Endothelial cell of umbilical vein (primary cell): ENCODE measurements at regions of chr19 and their contacts with region 1.

Region 1: DNA sequence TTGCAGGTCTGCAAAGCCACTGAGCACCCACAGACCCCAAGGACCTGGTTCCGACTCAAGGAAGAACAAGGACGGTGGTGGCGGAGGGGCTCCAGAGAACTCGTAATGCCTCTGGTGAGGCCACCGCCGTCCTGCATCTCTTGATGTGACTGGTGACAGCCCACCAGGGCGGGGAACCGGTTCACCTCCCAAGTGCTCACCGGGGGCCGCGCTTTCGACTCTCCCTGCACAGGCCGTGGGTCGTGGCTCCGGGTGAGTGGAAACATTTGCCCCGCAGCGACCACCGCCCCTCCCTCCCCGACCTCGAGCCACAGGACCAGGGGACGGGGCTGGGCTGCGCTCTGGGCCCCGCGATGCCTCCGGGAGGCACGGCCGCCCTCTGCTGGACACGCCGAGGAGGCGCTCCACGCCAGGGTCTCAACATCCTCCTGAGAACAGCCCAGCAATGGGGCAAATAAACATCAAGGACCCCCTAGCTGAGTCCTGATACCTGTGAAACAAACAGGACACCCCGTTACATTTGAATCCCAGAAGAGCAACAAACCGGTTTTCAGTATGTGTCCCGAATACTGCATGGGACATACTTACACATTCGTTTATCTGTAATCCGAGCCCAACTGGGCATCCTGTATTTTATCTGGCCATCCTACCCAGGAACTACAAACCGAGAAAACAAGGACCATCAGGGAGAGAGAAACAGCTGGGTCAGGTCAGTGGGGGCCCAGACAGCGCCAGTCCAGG is 3.9 kb upstream of the PLPP2 start:
- DNase-seq: no peak
- H3K4me3 ChIP-seq: no peak overlapping the region
- H3K27ac ChIP-seq: no peak overlapping the region
- H3K4me1 ChIP-seq: peaks cover 11% of the 10 kb centered on the region
- H3K27me3 ChIP-seq: peaks cover 16 to 28% of the 10 kb centered on the region in 2 experiments
- CTCF ChIP-seq: peak; percentile 77 to 97
- POLR2A ChIP-seq: no peak

Region 2: DNA sequence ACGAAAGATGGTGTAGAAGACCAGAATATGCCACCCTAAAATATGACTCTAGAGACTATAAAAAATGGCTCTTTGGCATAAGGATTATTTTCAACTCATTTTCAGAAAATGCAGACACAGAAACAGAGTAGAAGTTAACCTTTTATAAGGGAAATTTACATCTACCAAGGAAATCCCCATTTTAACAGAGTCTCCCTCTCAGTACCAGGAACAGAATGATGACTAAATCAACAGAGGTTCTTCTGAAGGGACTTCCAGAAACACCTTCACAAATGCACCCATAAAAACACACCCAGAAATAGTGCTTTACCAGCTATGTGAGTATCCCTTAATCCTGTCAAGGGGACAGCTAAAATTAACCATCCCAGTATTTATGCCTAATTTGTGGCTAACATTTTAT is 33.0 kb before region 1 on chr19:
- CTCF ChIA-PET with region 1: no interaction called
- POLR2A ChIA-PET with region 1: no interaction called
- dilution Hi-C with region 1: no loop called
- intact Hi-C with region 1: loop called (anchors 1 kb)
- DNase-seq: no peak
- H3K4me3 ChIP-seq: no peak overlapping the region
- H3K27ac ChIP-seq: no peak overlapping the region
- H3K4me1 ChIP-seq: no peaks in the 10 kb centered on the region
- H3K27me3 ChIP-seq: peaks cover 10 to 25% of the 10 kb centered on the region in 2 experiments
- CTCF ChIP-seq: no peak
- POLR2A ChIP-seq: no peak

Region 3: DNA sequence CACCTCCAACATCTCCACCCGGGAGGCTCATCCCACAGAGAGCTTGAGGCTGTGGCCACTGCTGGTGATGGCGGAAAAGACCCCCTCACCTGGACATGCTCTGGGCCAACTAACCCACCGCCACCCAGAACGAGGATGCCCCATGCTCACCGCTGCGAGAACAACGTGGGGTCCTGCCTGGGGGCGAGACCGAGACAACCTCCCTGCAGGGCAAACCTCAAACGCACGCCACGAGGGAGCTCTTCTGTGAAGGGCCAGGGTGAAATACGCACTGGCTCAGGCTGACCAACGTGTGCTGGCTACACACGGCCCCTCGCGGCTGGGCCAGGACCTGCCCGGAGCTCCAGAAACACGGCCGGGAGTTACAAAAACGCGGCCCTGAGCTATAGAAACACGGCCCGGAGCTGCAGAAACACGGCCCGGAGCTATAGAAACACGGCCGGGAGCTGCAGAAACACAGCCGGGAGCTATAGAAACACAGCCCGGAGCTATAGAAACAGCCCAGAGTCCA is 15.1 kb after region 1 on chr19:
- CTCF ChIA-PET with region 1: interaction called, 29 read pairs
- POLR2A ChIA-PET with region 1: no interaction called
- dilution Hi-C with region 1: no loop called
- intact Hi-C with region 1: no loop called
- DNase-seq: peak; percentile 85
- H3K4me3 ChIP-seq: peak overlapping the region; percentile 0 to 26 (median 5)
- H3K27ac ChIP-seq: peak overlapping the region; percentile 10
- H3K4me1 ChIP-seq: peaks cover 23% of the 10 kb centered on the region
- H3K27me3 ChIP-seq: no peaks in the 10 kb centered on the region
- CTCF ChIP-seq: peak in 1 of 2 donors; percentile 30
- POLR2A ChIP-seq: no peak

Region 4: DNA sequence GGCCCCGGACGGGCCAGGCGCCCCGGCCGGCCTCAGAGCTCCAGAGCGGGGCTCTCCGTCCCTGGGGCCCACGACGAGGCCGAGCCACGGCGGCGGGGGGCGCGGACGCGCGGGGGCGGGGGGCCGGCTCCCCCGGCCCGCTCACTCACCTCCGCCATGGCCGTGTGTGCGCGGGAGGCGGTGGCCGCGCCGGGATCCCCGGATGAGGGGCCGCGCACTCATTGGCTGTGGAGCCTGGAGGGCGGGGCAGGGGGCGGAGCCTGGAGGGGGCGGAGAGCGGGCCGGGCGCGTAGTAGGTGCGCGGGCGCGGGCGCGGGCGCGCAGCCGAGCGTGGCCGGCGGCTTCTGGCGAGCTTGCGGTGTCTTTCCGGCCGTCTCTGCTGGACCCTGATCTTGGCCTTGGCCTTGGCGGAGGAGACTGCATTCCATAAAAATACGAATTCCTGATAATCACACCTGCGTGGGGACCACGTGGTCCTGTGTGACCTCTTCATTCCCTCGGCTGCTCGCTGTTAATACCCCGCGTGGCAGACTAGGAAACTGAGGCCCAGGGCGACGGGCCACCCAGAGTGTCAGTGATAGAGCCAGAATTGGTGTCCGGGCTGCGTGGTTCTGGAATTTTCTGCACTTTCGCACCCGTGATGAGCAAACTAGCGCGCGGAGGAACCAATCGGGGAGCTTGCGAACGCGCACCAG is 49.7 kb after region 1 on chr19 and contains the start of gene MIER2:
- CTCF ChIA-PET with region 1: interaction called, 5 read pairs
- POLR2A ChIA-PET with region 1: no interaction called
- dilution Hi-C with region 1: no loop called
- intact Hi-C with region 1: loop called (anchors 10 kb)
- DNase-seq: peak; percentile 74
- H3K4me3 ChIP-seq: peak within 1 kb of the TSS; percentile 73 to 89 (median 75)
- H3K27ac ChIP-seq: peak within 1 kb of the TSS; percentile 63
- H3K4me1 ChIP-seq: peaks cover 39% of the 10 kb centered on the region
- H3K27me3 ChIP-seq: no peaks in the 10 kb centered on the region
- CTCF ChIP-seq: no peak
- POLR2A ChIP-seq: no peak
- total RNA-seq, gene MIER2: 41.7 and 44.9 TPM in 2 replicates